Brain microvascular endothelial cell (primary cell): ENCODE measurements at regions of chr7 and their contacts with region 1.

Region 1: GRCh38 chr7:151372612-151373265 is 31.1 kb downstream of the NUB1 start:
- DNase-seq: no peak
- H3K4me3 ChIP-seq: no peak overlapping the region
- H3K27ac ChIP-seq: no peak overlapping the region
- H3K27me3 ChIP-seq: no peaks in the 10 kb centered on the region
- CTCF ChIP-seq: no peak

Region 2: GRCh38 chr7:151448261-151449252 is 75.8 kb after region 1 on chr7:
- in situ Hi-C with region 1: loop called (anchors 10 kb)
- DNase-seq: peak; percentile 53
- H3K4me3 ChIP-seq: peak overlapping the region; percentile 59
- H3K27ac ChIP-seq: no peak overlapping the region
- H3K27me3 ChIP-seq: no peaks in the 10 kb centered on the region
- CTCF ChIP-seq: peak; percentile 86